Mammary epithelial cell (primary cell): ENCODE measurements at regions of chr20 and their contacts with region 1.

Region 1: DNA sequence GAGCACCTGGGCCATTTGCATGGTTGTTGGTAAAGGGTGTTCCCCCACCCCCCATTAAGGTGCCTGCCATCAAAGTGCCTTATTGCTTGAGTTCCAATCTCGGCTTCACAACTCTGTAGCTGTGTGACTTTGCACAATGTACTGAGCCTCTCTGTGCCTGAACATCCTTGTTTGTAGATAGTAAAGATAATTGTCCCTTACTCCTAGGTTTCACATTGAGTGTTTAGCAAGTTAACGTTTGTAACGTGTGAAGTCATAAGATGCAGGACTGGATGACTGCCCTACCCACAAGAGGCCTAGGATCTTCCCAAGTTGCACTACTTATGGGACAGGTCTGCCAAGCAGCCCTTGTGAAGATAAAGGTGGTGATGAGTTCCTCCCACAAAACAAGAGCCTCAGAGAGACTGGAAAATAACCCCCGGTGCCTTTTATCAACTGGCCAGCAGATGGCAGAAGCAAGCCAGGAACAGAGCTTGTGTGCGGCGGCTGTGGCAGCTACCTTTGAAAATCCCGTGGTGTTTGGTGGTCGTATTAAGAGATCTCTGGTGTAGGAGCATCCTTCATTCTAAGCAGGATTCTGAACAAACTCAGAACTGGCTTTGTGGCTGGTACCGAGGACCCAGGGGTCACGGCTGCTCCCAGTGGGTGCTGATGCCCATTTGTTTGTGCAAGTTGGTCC is 99.0 kb downstream of the CDH26 start:
- DNase-seq: peak; percentile 65
- H3K4me3 ChIP-seq: peak overlapping the region in 1 of 3 experiments; percentile 58
- H3K27ac ChIP-seq: no peak overlapping the region
- H3K4me1 ChIP-seq: peaks cover 63% of the 10 kb centered on the region
- H3K27me3 ChIP-seq: no peaks in the 10 kb centered on the region
- CTCF ChIP-seq: peak; percentile 90

Region 2: DNA sequence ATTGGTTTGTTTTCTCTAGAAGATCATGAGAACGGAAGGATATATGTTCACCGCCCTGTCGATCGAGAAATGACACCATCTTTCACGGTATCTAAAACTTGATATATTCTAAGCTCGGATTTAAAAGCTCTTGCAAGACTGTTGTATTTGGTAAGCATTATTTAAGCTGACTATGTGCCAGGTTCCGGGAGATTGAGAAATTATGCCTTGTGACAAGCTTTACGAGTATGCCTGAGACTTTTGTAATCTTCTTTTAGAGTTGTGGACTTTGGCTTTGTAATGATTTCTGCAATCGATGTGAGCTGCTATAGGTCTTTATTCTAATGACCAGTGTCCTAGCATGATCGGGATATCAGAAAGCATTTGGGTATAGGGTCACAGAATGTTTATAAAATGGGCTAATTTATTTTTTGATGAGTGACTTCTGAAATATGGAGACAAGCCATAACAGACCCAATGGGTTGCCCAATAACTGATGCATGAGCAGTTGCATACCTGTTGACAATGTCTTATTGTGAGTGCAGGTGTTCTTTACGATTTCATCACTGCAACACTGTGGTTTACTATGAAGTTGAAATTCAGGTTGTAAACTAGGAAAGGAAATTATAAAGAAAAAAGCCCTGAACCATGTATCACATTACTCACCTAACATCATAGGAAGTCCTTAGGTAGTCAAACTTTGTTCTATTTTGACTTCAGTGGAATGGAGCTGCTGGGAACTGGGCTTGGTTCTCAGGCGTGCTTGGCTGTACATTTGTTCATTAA is 85.0 kb before region 1 on chr20:
- CTCF ChIA-PET with region 1: no interaction called
- dilution Hi-C with region 1: no loop called
- in situ Hi-C with region 1: loop called in 1 of 2 experiments (anchors 10 kb)
- intact Hi-C with region 1: no loop called
- DNase-seq: peak; percentile 98
- H3K4me3 ChIP-seq: no peak overlapping the region
- H3K27ac ChIP-seq: peak overlapping the region; percentile 93
- H3K4me1 ChIP-seq: peaks cover 28% of the 10 kb centered on the region
- H3K27me3 ChIP-seq: no peaks in the 10 kb centered on the region
- CTCF ChIP-seq: no peak

Region 3: GRCh38 chr20:60046011-60046413 is 11.2 kb before region 1 on chr20:
- CTCF ChIA-PET with region 1: no interaction called
- dilution Hi-C with region 1: no loop called
- in situ Hi-C with region 1: no loop called
- intact Hi-C with region 1: no loop called
- DNase-seq: no peak
- H3K4me3 ChIP-seq: no peak overlapping the region
- H3K27ac ChIP-seq: no peak overlapping the region
- H3K4me1 ChIP-seq: peaks cover 34% of the 10 kb centered on the region
- H3K27me3 ChIP-seq: no peaks in the 10 kb centered on the region
- CTCF ChIP-seq: no peak

Region 4: GRCh38 chr20:60172346-60172984 is 115.2 kb after region 1 on chr20:
- CTCF ChIA-PET with region 1: no interaction called
- dilution Hi-C with region 1: no loop called
- in situ Hi-C with region 1: no loop called
- intact Hi-C with region 1: no loop called
- DNase-seq: no peak
- H3K4me3 ChIP-seq: no peak overlapping the region
- H3K27ac ChIP-seq: no peak overlapping the region
- H3K4me1 ChIP-seq: peaks cover 5% of the 10 kb centered on the region
- H3K27me3 ChIP-seq: no peaks in the 10 kb centered on the region
- CTCF ChIP-seq: no peak

Region 5: GRCh38 chr20:60365056-60365666 is 307.9 kb after region 1 on chr20:
- CTCF ChIA-PET with region 1: no interaction called
- dilution Hi-C with region 1: no loop called
- in situ Hi-C with region 1: no loop called
- intact Hi-C with region 1: loop called (anchors 1 kb)
- DNase-seq: no peak
- H3K4me3 ChIP-seq: no peak overlapping the region
- H3K27ac ChIP-seq: no peak overlapping the region
- H3K4me1 ChIP-seq: no peaks in the 10 kb centered on the region
- H3K27me3 ChIP-seq: no peaks in the 10 kb centered on the region
- CTCF ChIP-seq: peak; percentile 30 to 40

Region 6: GRCh38 chr20:60700728-60701127 is 643.5 kb after region 1 on chr20:
- CTCF ChIA-PET with region 1: no interaction called
- dilution Hi-C with region 1: no loop called
- in situ Hi-C with region 1: no loop called
- intact Hi-C with region 1: no loop called
- DNase-seq: no peak
- H3K4me3 ChIP-seq: no peak overlapping the region
- H3K27ac ChIP-seq: no peak overlapping the region
- H3K4me1 ChIP-seq: peaks cover 6% of the 10 kb centered on the region
- H3K27me3 ChIP-seq: no peaks in the 10 kb centered on the region
- CTCF ChIP-seq: no peak